ENCODE measurements at regions of chr17 and their contacts with region 1.

Region 1: DNA sequence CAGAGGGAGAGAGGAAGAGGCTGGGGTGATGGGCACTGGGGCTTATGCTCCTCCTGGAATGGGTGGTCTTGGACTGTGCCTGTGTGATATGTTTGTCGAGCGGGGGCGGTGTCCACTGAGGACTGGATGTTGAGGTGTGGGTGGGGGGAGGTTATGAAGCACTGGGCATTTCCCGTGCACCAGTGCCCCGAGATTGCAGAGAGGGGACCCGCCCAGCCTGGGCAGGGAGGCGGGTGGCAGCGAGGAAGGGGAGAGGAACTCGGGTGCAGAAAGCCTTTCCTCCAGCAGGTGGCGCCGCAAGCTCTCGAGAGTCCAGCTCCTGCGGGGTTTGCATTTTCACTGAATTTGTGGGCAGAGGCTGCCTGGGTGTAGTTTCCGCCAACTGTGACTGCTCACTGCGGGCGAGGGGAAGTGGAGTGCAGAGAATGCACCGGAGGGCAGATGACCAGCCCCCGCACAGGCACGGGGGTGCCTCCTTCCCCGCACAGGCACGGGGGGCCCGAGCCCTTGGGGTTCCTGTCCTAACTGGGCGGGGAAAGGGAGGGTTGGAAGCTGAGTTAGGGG is 190.6 kb downstream of the SEC14L1 start:
- DNase-seq: peak; percentile 99
- H3K4me3 ChIP-seq: peak overlapping the region; percentile 32 to 47 (median 36)
- H3K27ac ChIP-seq: peak overlapping the region; percentile 57 to 78 (median 68)
- H3K4me1 ChIP-seq: peaks cover 13 to 54% (median 30%) of the 10 kb centered on the region in 4 donors
- H3K27me3 ChIP-seq: no peaks in the 10 kb centered on the region
- CTCF ChIP-seq: peak; percentile 96 to 98 (median 98)
- EP300 ChIP-seq: no peak
- POLR2A ChIP-seq: no peak

Region 2: GRCh38 chr17:77297693-77298666 is 33.4 kb before region 1 on chr17:
- intact Hi-C with region 1: no loop called
- DNase-seq: no peak
- H3K4me3 ChIP-seq: no peak overlapping the region
- H3K27ac ChIP-seq: no peak overlapping the region
- H3K4me1 ChIP-seq: no peaks in the 10 kb centered on the region
- H3K27me3 ChIP-seq: no peaks in the 10 kb centered on the region
- CTCF ChIP-seq: no peak
- EP300 ChIP-seq: no peak
- POLR2A ChIP-seq: no peak

Region 3: GRCh38 chr17:77365584-77366186 is 34.3 kb after region 1 on chr17:
- intact Hi-C with region 1: loop called (anchors 5 kb)
- DNase-seq: no peak
- H3K4me3 ChIP-seq: no peak overlapping the region
- H3K27ac ChIP-seq: peak overlapping the region; percentile 65 to 76 (median 72)
- H3K4me1 ChIP-seq: peaks cover 42 to 64% (median 61%) of the 10 kb centered on the region in 4 donors
- H3K27me3 ChIP-seq: no peaks in the 10 kb centered on the region
- CTCF ChIP-seq: no peak
- EP300 ChIP-seq: no peak
- POLR2A ChIP-seq: no peak

Region 4: GRCh38 chr17:77429919-77430752 is 98.8 kb after region 1 on chr17:
- intact Hi-C with region 1: loop called (anchors 5 kb)
- DNase-seq: peak; percentile 98
- H3K4me3 ChIP-seq: no peak overlapping the region
- H3K27ac ChIP-seq: peak overlapping the region; percentile 96 to 99 (median 98)
- H3K4me1 ChIP-seq: peaks cover 89 to 100% (median 100%) of the 10 kb centered on the region in 4 donors
- H3K27me3 ChIP-seq: no peaks in the 10 kb centered on the region
- CTCF ChIP-seq: peak; percentile 84 to 94 (median 93)
- EP300 ChIP-seq: peak; percentile 67
- POLR2A ChIP-seq: no peak

Region 5: GRCh38 chr17:77494664-77495435 is 163.5 kb after region 1 on chr17:
- intact Hi-C with region 1: loop called (anchors 1 kb)
- DNase-seq: no peak
- H3K4me3 ChIP-seq: no peak overlapping the region
- H3K27ac ChIP-seq: peak overlapping the region; percentile 67 to 81 (median 72)
- H3K4me1 ChIP-seq: peaks cover 18 to 33% (median 29%) of the 10 kb centered on the region in 4 donors
- H3K27me3 ChIP-seq: no peaks in the 10 kb centered on the region
- CTCF ChIP-seq: peak; percentile 98 to 100 (median 99)
- EP300 ChIP-seq: no peak
- POLR2A ChIP-seq: no peak